ENCODE measurements at regions of chr15 and their contacts with region 1.

Region 1: GRCh38 chr15:93035953-93036800 is 52.8 kb downstream of the RGMA start:
- DNase-seq: peak; percentile 69
- H3K4me3 ChIP-seq: no peak overlapping the region
- H3K27ac ChIP-seq: no peak overlapping the region
- H3K4me1 ChIP-seq: peaks cover 0 to 8% of the 10 kb centered on the region in 2 experiments; a peak in 1 of 4 replicates
- H3K27me3 ChIP-seq: no peaks in the 10 kb centered on the region
- CTCF ChIP-seq: peak; percentile 54
- EP300 ChIP-seq: no peak
- RAD21 ChIP-seq: peak; percentile 47

Region 2: GRCh38 chr15:93060336-93061263 is 24.4 kb after region 1 on chr15:
- CTCF ChIA-PET with region 1: interaction called, 11 read pairs
- POLR2A ChIA-PET with region 1: no interaction called
- DNase-seq: no peak
- H3K4me3 ChIP-seq: no peak overlapping the region
- H3K27ac ChIP-seq: no peak overlapping the region
- H3K4me1 ChIP-seq: peaks cover 0 to 3% of the 10 kb centered on the region in 2 experiments; a peak in 2 of 4 replicates
- H3K27me3 ChIP-seq: no peaks in the 10 kb centered on the region
- CTCF ChIP-seq: no peak
- EP300 ChIP-seq: no peak
- RAD21 ChIP-seq: no peak

Region 3: DNA sequence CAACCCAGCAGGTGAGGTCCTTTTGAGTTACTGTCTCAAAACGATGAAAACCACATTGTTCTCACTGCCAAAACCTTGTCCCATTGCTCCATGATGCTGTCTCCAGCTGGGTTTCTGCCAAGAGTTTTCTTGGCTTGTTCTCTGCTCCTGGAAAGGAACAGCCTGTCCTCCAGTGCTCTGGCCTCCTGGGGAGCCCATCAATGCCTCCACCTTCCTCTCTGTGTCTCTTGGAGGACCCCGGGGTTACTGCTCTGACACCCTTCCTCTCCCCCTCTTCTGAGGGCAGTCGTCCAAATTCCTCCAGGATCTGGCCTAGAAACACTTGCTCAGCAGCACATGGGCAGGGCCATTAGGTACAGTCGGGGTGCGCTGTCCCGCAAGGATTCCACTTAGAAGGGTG is 116.8 kb after region 1 on chr15:
- CTCF ChIA-PET with region 1: no interaction called
- POLR2A ChIA-PET with region 1: no interaction called
- DNase-seq: no peak
- H3K4me3 ChIP-seq: no peak overlapping the region
- H3K27ac ChIP-seq: no peak overlapping the region
- H3K4me1 ChIP-seq: no peaks in the 10 kb centered on the region
- H3K27me3 ChIP-seq: no peaks in the 10 kb centered on the region
- CTCF ChIP-seq: no peak
- EP300 ChIP-seq: no peak
- RAD21 ChIP-seq: no peak